Esophagus squamous epithelium (tissue), 5 donors: ENCODE measurements at regions of chr19 and their contacts with region 1.

Region 1: DNA sequence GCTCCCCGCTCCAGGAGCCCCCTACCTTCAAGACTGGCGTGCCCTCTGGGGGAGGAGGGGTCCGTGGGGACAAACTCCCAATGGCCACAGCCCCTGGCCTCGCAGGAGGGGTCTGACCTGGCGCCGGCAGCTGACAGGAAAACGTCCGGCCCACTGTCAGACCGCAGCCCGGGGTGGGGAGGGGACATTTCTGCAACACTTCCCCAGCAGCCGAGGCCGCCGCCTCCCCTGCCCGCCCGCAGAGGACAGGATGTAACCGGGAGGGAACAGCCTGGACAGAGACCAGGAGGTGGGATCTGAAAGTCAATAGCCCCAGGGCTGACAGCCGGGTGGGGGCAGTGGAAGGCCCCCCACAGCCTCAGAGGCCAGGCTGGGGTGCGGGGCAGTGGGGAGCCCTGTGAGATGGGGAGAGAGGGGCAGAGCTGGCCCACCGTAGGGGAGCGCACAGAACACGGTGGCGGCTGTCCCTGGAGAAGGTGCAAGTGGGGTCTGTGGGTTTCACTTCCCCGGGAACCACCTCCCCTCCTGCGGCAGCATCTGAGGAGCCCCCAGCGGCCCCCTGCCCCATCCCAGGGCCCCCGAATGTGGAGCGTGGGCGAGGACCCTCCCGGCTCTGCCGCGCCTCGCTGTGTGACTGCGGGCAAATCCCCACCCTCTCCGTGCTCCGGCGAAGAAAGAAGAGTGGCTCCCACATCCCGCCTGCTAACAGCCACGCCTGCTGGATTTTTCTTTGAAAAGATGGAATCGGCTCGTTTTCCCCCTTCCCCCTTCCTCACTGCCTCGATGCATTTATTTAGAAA is at the start of gene PEAK3:
- DNase-seq: peak; percentile 54
- H3K4me3 ChIP-seq: peak within 1 kb of the TSS in 3 of 4 donors; percentile 37 to 61 (median 39)
- H3K27ac ChIP-seq: peak within 1 kb of the TSS; percentile 12 to 62 (median 38)
- H3K4me1 ChIP-seq: peaks cover 0 to 16% (median 10%) of the 10 kb centered on the region in 3 donors
- H3K27me3 ChIP-seq: peaks cover 0 to 36% (median 0%) of the 10 kb centered on the region in 4 donors
- CTCF ChIP-seq: no peak
- POLR2A ChIP-seq: peak in 1 of 4 donors; percentile 18
- total RNA-seq, gene PEAK3: 0.32 to 0.40 (median 0.38) TPM in 3 of 4 donors, not detected in the other

Region 2: GRCh38 chr19:2391118-2391725 is 109.0 kb after region 1 on chr19:
- intact Hi-C with region 1: loop called (anchors 10 kb)
- DNase-seq: no peak
- H3K4me3 ChIP-seq: no peak overlapping the region
- H3K27ac ChIP-seq: no peak overlapping the region
- H3K4me1 ChIP-seq: no peaks in the 10 kb centered on the region
- H3K27me3 ChIP-seq: peaks cover 0 to 37% (median 0%) of the 10 kb centered on the region in 4 donors
- CTCF ChIP-seq: peak; percentile 46 to 84 (median 74)
- POLR2A ChIP-seq: no peak

Region 3: GRCh38 chr19:2627319-2627829 is 345.1 kb after region 1 on chr19:
- intact Hi-C with region 1: loop called (anchors 10 kb)
- DNase-seq: peak; percentile 63
- H3K4me3 ChIP-seq: no peak overlapping the region
- H3K27ac ChIP-seq: peak overlapping the region; percentile 72 to 93 (median 84)
- H3K4me1 ChIP-seq: peaks cover 13 to 56% (median 26%) of the 10 kb centered on the region in 3 donors
- H3K27me3 ChIP-seq: no peaks in the 10 kb centered on the region
- CTCF ChIP-seq: no peak
- POLR2A ChIP-seq: peak in 1 of 4 donors; percentile 20